AG04450 (cell line): ENCODE measurements at regions of chr1 and their contacts with region 1.

Region 1: GRCh38 chr1:68120136-68120791 is 69.8 kb upstream of the DIRAS3 start:
- DNase-seq: peak; percentile 74
- H3K4me3 ChIP-seq: no peak overlapping the region
- H3K27ac ChIP-seq: no peak overlapping the region
- H3K27me3 ChIP-seq: no peaks in the 10 kb centered on the region
- CTCF ChIP-seq: peak; percentile 85

Region 2: DNA sequence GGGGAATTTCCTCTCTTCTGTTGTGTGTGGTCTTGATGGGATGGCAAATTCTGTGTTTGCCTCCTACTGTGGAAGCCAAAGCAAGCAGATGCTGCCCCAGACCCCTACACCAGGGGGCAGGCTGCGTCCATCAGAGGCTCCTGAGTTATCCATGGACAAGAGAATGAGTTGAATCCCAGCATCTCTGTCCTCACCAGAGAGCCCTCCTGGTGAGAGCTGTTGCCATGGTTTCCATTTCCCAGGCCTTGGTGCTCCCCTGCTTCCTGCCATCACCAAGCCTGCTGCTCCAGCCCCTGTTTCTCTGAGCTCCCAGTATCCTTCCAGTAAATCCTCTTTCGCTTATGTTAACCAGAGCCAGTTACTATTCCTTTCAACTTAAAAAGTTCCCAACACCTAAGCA is 266.6 kb before region 1 on chr1:
- CTCF ChIA-PET with region 1: interaction called, 208 read pairs
- POLR2A ChIA-PET with region 1: no interaction called
- DNase-seq: no peak
- H3K4me3 ChIP-seq: no peak overlapping the region
- H3K27ac ChIP-seq: no peak overlapping the region
- H3K27me3 ChIP-seq: no peaks in the 10 kb centered on the region
- CTCF ChIP-seq: peak; percentile 99

Region 3: GRCh38 chr1:68046885-68047658 is 73.2 kb before region 1 on chr1:
- CTCF ChIA-PET with region 1: no interaction called
- POLR2A ChIA-PET with region 1: no interaction called
- DNase-seq: no peak
- H3K4me3 ChIP-seq: no peak overlapping the region
- H3K27ac ChIP-seq: no peak overlapping the region
- H3K27me3 ChIP-seq: no peaks in the 10 kb centered on the region
- CTCF ChIP-seq: no peak

Region 4: DNA sequence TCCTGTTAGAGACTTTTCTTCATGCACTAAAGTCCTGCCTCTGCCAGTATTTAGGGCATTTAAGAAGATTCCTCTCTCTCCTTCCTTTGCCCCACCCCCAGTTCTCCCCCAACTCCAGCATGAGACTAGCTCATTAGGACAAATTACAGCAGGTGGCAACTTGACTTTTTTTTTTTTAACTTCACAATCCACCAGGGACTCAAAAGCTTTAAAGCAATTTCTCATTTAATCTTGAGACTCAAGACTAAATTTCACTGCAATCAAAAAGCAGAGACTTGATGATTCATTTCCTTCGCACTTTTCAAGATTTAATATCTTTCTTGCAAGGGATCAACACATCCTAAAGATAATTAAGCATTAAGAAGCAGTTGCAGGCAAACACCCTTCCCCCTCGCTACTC is 37.2 kb after region 1 on chr1:
- CTCF ChIA-PET with region 1: interaction called, 10 read pairs
- POLR2A ChIA-PET with region 1: no interaction called
- DNase-seq: no peak
- H3K4me3 ChIP-seq: no peak overlapping the region
- H3K27ac ChIP-seq: no peak overlapping the region
- H3K27me3 ChIP-seq: no peaks in the 10 kb centered on the region
- CTCF ChIP-seq: no peak

Region 5: DNA sequence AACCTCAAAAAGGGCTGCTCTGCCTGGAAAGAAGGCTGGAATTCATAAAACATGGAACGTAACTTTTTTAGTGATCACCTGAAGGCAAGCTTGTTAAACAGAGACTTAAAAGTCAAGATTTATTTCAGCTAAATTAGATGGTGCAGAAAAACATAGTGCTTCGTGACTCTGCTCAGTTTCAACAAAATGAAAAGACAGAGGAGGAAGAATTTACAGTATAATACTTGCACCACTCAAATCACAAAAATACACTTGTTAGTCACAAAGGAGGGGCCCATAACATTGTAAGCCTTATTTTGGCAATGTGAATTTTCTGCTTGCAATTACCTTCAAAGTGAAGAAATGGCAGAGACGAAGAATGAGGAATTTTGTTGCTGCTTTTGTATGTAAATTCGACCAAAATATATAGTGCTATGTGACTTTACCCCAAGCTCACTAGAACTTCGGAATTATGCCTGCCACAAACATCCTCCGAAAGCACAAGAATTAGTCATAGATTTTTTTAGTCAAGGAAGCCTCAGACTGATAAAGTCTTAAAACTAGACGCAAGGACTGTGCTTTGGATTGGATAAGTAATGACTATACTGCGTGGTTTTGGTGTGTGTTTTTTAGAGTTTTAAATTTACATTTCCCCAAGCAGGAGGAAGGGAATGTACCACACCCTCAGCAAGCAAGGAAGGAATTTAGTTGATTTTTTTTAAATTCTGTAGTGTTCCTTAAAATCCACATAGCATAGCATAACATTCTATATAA is 101.5 kb after region 1 on chr1:
- CTCF ChIA-PET with region 1: interaction called, 14 read pairs
- POLR2A ChIA-PET with region 1: no interaction called
- DNase-seq: no peak
- H3K4me3 ChIP-seq: no peak overlapping the region
- H3K27ac ChIP-seq: no peak overlapping the region
- H3K27me3 ChIP-seq: no peaks in the 10 kb centered on the region
- CTCF ChIP-seq: no peak

Region 6: DNA sequence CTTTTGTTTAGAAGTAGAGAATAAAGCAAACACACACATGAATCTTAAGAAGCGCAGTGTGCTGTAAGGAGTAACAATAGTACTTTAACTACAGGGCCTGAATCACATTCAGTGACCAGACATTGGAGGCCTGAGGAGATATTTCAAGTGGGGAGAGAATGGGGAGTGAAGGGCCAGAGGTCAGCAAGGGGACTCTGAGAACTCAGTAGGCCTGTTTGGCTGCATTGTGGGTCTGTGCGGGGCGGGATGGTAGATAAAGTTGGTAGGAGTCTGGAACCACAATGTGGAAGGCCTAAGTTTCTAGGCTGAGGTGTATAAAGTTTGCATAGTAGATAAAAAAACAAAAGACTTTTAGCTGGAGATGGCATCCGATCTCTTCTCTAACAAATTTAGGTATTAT is 164.8 kb after region 1 on chr1:
- CTCF ChIA-PET with region 1: no interaction called
- POLR2A ChIA-PET with region 1: no interaction called
- DNase-seq: no peak
- H3K4me3 ChIP-seq: no peak overlapping the region
- H3K27ac ChIP-seq: no peak overlapping the region
- H3K27me3 ChIP-seq: no peaks in the 10 kb centered on the region
- CTCF ChIP-seq: no peak

Region 7: GRCh38 chr1:68321084-68321685 is 200.9 kb after region 1 on chr1:
- CTCF ChIA-PET with region 1: interaction called, 115 read pairs
- POLR2A ChIA-PET with region 1: no interaction called
- DNase-seq: no peak
- H3K4me3 ChIP-seq: no peak overlapping the region
- H3K27ac ChIP-seq: no peak overlapping the region
- H3K27me3 ChIP-seq: no peaks in the 10 kb centered on the region
- CTCF ChIP-seq: peak; percentile 88

Region 8: GRCh38 chr1:68358439-68358838 is 238.2 kb after region 1 on chr1:
- CTCF ChIA-PET with region 1: interaction called, 24 read pairs
- POLR2A ChIA-PET with region 1: no interaction called
- DNase-seq: no peak
- H3K4me3 ChIP-seq: no peak overlapping the region
- H3K27ac ChIP-seq: no peak overlapping the region
- H3K27me3 ChIP-seq: no peaks in the 10 kb centered on the region
- CTCF ChIP-seq: no peak

Region 9: GRCh38 chr1:68442822-68443556 is 322.7 kb after region 1 on chr1:
- CTCF ChIA-PET with region 1: interaction called, 137 read pairs
- POLR2A ChIA-PET with region 1: interaction called, 3 read pairs
- DNase-seq: peak; percentile 36
- H3K4me3 ChIP-seq: no peak overlapping the region
- H3K27ac ChIP-seq: no peak overlapping the region
- H3K27me3 ChIP-seq: no peaks in the 10 kb centered on the region
- CTCF ChIP-seq: peak; percentile 81